Pancreas (tissue), 10 donors: ENCODE measurements at regions of chr14 and their contacts with region 1.

Region 1: DNA sequence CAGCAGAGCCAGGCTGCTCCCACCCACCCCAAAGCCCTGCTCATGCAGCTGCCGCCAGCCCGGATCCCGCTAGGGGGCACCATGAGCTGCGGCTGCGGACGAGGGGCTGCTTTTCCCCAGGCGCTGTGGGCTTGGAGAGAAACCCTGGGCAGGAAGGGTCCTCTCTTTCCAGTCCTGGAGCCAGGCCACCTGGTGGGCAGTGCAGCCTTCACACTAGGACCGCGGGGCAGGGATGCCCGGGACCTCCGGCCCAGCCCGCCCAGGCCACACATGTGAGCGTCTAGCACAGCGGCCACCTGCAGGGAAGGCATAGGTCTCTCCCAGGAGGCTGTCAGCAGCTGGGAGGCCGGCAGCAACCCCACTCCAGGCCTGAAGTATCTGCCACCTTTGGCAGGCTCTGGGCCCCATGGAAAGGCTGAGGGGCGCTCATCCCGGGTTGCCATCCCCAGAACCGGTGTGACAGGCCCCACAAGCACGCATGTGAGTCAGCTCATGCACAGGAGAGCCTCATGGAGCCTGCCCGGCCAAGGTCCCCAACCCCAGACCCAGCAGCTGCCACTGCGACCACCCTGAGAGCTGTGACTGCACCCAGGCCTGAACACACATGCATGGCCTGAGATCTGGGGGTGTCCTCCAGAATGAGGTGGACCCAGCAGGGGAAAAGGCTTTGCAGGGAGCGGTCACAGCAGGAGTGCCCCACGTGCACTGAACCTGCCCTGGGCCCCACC is 280.0 kb upstream of the RTL1 start:
- DNase-seq: peak in 3 of 6 donors; percentile 12 to 69 (median 50)
- ATAC-seq: peak in 2 of 4 donors; percentile 50 to 54
- H3K4me3 ChIP-seq: no peak overlapping the region
- H3K27ac ChIP-seq: no peak overlapping the region
- H3K4me1 ChIP-seq: no peaks in the 10 kb centered on the region
- H3K27me3 ChIP-seq: no peaks in the 10 kb centered on the region
- CTCF ChIP-seq: peak in 1 of 4 donors; percentile 11

Region 2: GRCh38 chr14:101335061-101335661 is 151.6 kb after region 1 on chr14:
- intact Hi-C with region 1: no loop called
- DNase-seq: no peak
- ATAC-seq: peak in 3 of 4 donors; percentile 60 to 72 (median 67)
- H3K4me3 ChIP-seq: no peak overlapping the region
- H3K27ac ChIP-seq: no peak overlapping the region
- H3K4me1 ChIP-seq: peaks cover 0 to 15% (median 0%) of the 10 kb centered on the region in 3 donors
- H3K27me3 ChIP-seq: no peaks in the 10 kb centered on the region
- CTCF ChIP-seq: no peak

Region 3: GRCh38 chr14:101559624-101560533 is 376.3 kb after region 1 on chr14:
- intact Hi-C with region 1: loop called in 1 of 3 experiments (anchors 10 kb)
- DNase-seq: peak; percentile 39 to 81 (median 58)
- ATAC-seq: peak; percentile 78 to 89 (median 87)
- H3K4me3 ChIP-seq: peak overlapping the region; percentile 26 to 49 (median 34)
- H3K27ac ChIP-seq: no peak overlapping the region
- H3K4me1 ChIP-seq: no peaks in the 10 kb centered on the region
- H3K27me3 ChIP-seq: peaks cover 0 to 30% (median 8%) of the 10 kb centered on the region in 4 donors
- CTCF ChIP-seq: no peak

Region 4: GRCh38 chr14:101635749-101636560 is 452.4 kb after region 1 on chr14:
- intact Hi-C with region 1: loop called in 1 of 3 experiments (anchors 10 kb)
- DNase-seq: no peak
- ATAC-seq: no peak
- H3K4me3 ChIP-seq: no peak overlapping the region
- H3K27ac ChIP-seq: no peak overlapping the region
- H3K4me1 ChIP-seq: no peaks in the 10 kb centered on the region
- H3K27me3 ChIP-seq: no peaks in the 10 kb centered on the region
- CTCF ChIP-seq: no peak